ENCODE measurements at regions of chr1 and their contacts with region 1.

Region 1: GRCh38 chr1:29793101-29793546 is 556.8 kb downstream of the PTPRU start:
- DNase-seq: peak; percentile 88
- ATAC-seq: peak; percentile 39
- H3K4me3 Mint-ChIP-seq: no peak overlapping the region
- H3K27ac Mint-ChIP-seq: no peak overlapping the region
- H3K4me1 Mint-ChIP-seq: no peaks in the 10 kb centered on the region
- H3K27me3 Mint-ChIP-seq: peaks cover 5% of the 10 kb centered on the region

Region 2: GRCh38 chr1:29444782-29445729 is 348.1 kb before region 1 on chr1:
- CTCF ChIA-PET with region 1: no interaction called
- POLR2A ChIA-PET with region 1: no interaction called
- intact Hi-C with region 1: no loop called
- DNase-seq: no peak
- ATAC-seq: no peak
- H3K4me3 Mint-ChIP-seq: no peak overlapping the region
- H3K27ac Mint-ChIP-seq: no peak overlapping the region
- H3K4me1 Mint-ChIP-seq: no peaks in the 10 kb centered on the region
- H3K27me3 Mint-ChIP-seq: peaks cover 15% of the 10 kb centered on the region

Region 3: DNA sequence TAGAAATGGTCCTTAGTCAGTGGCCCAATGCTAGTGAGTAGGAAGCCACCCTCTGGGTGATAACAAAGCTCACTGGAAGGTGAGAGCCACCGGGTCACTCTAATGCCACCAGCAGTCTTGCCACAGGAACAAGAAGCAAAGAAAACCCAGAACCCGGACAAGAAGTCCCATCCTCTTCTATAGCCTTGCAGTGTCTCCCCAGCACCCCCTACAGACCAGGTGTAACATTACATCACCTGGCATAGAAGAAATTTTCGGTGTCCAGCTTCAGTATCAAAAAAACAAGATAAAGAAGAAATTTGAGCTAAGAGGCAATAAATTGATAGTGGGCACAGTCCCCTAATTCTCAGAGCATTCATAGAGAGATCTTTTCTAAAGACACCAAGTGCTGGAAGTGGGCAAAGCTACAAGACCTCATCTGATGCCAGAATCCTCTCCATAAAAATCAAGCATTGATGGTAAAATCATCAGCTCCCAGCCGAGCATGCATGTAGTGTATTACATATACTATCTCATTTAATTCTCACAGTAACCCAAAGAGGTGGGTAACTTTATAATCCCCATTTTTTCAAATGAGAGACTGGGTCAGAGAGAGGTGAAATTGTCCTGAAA is 439.3 kb after region 1 on chr1:
- CTCF ChIA-PET with region 1: interaction called, 8 read pairs
- POLR2A ChIA-PET with region 1: no interaction called
- intact Hi-C with region 1: loop called in 1 of 2 experiments (anchors 5 kb)
- DNase-seq: peak; percentile 40
- ATAC-seq: no peak
- H3K4me3 Mint-ChIP-seq: no peak overlapping the region
- H3K27ac Mint-ChIP-seq: no peak overlapping the region
- H3K4me1 Mint-ChIP-seq: no peaks in the 10 kb centered on the region
- H3K27me3 Mint-ChIP-seq: peaks cover 4% of the 10 kb centered on the region

Region 4: GRCh38 chr1:30379684-30380624 is 586.8 kb after region 1 on chr1:
- CTCF ChIA-PET with region 1: interaction called, 5 read pairs
- POLR2A ChIA-PET with region 1: no interaction called
- intact Hi-C with region 1: loop called in 1 of 2 experiments (anchors 2 kb)
- DNase-seq: peak; percentile 59
- ATAC-seq: peak; percentile 53
- H3K4me3 Mint-ChIP-seq: no peak overlapping the region
- H3K27ac Mint-ChIP-seq: no peak overlapping the region
- H3K4me1 Mint-ChIP-seq: peaks cover 2% of the 10 kb centered on the region
- H3K27me3 Mint-ChIP-seq: peaks cover 6% of the 10 kb centered on the region